ENCODE measurements at regions of chr4 and their contacts with region 1.

Region 1: GRCh38 chr4:1200425-1201035 is 28.1 kb upstream of the SPON2 start:
- DNase-seq: peak in 2 of 10 donors; percentile 12 to 56
- ATAC-seq: no peak
- H3K4me3 Mint-ChIP-seq: peak overlapping the region; percentile 76 to 94 (median 82)
- H3K27ac Mint-ChIP-seq: peak overlapping the region; percentile 25 to 99 (median 97)
- H3K4me1 Mint-ChIP-seq: peaks cover 16 to 65% (median 47%) of the 10 kb centered on the region in 4 donors
- H3K27me3 Mint-ChIP-seq: no peaks in the 10 kb centered on the region

Region 2: GRCh38 chr4:1167247-1167949 is 33.1 kb before region 1 on chr4:
- POLR2A ChIA-PET with region 1: interaction called, 26 read pairs
- DNase-seq: peak; percentile 80 to 94 (median 87)
- ATAC-seq: peak; percentile 84 to 87
- H3K4me3 Mint-ChIP-seq: peak overlapping the region; percentile 84 to 90 (median 87)
- H3K27ac Mint-ChIP-seq: peak overlapping the region; percentile 8 to 96 (median 92)
- H3K4me1 Mint-ChIP-seq: peaks cover 13 to 41% (median 29%) of the 10 kb centered on the region in 4 donors
- H3K27me3 Mint-ChIP-seq: peaks cover 2 to 11% (median 7%) of the 10 kb centered on the region in 5 donors

Region 3: GRCh38 chr4:1183985-1184773 is 16.4 kb before region 1 on chr4:
- POLR2A ChIA-PET with region 1: interaction called, 17 read pairs
- DNase-seq: no peak
- ATAC-seq: no peak
- H3K4me3 Mint-ChIP-seq: peak overlapping the region in 5 of 10 donors; percentile 5 to 74 (median 52)
- H3K27ac Mint-ChIP-seq: peak overlapping the region in 5 of 10 donors; percentile 11 to 76 (median 49)
- H3K4me1 Mint-ChIP-seq: peaks cover 7 to 48% (median 17%) of the 10 kb centered on the region in 4 donors
- H3K27me3 Mint-ChIP-seq: peaks cover 0 to 2% (median 0%) of the 10 kb centered on the region in 5 donors

Region 4: GRCh38 chr4:1216869-1217294 is 16.4 kb after region 1 on chr4:
- POLR2A ChIA-PET with region 1: interaction called, 16 read pairs
- DNase-seq: peak; percentile 45 to 82 (median 70)
- ATAC-seq: peak; percentile 96 to 99
- H3K4me3 Mint-ChIP-seq: peak overlapping the region; percentile 57 to 79 (median 74)
- H3K27ac Mint-ChIP-seq: peak overlapping the region in 9 of 10 donors; percentile 43 to 85 (median 71)
- H3K4me1 Mint-ChIP-seq: peaks cover 23 to 52% (median 41%) of the 10 kb centered on the region in 4 donors
- H3K27me3 Mint-ChIP-seq: no peaks in the 10 kb centered on the region

Region 5: GRCh38 chr4:1249148-1249730 is 48.7 kb after region 1 on chr4:
- POLR2A ChIA-PET with region 1: interaction called, 52 read pairs
- DNase-seq: peak; percentile 75 to 91 (median 86)
- ATAC-seq: peak; percentile 64 to 69
- H3K4me3 Mint-ChIP-seq: peak overlapping the region; percentile 83 to 95 (median 90)
- H3K27ac Mint-ChIP-seq: peak overlapping the region; percentile 90 to 97 (median 95)
- H3K4me1 Mint-ChIP-seq: peaks cover 31 to 76% (median 70%) of the 10 kb centered on the region in 4 donors
- H3K27me3 Mint-ChIP-seq: no peaks in the 10 kb centered on the region

Measured in naive thymus-derived CD8-positive, alpha-beta T cell (primary cell).